CD4-positive, alpha-beta memory T cell (primary cell): ENCODE measurements at regions of chr16 and their contacts with region 1.

Region 1: GRCh38 chr16:23858542-23858941 is 22.8 kb downstream of the PRKCB start:
- DNase-seq: no peak
- H3K4me3 ChIP-seq: no peak overlapping the region
- H3K4me3 Mint-ChIP-seq: peak overlapping the region in 2 of 8 donors; percentile 44 to 45
- H3K27ac ChIP-seq: no peak overlapping the region
- H3K27ac Mint-ChIP-seq: peak overlapping the region in 4 of 7 donors; percentile 32 to 74 (median 52)
- H3K4me1 ChIP-seq: peaks cover 83% of the 10 kb centered on the region
- H3K4me1 Mint-ChIP-seq: peaks cover 64 to 90% (median 79%) of the 10 kb centered on the region in 4 donors
- H3K27me3 ChIP-seq: no peaks in the 10 kb centered on the region
- H3K27me3 Mint-ChIP-seq: no peaks in the 10 kb centered on the region

Region 2: GRCh38 chr16:23670137-23670776 is 188.3 kb before region 1 on chr16:
- CTCF ChIA-PET with region 1: no interaction called
- POLR2A ChIA-PET with region 1: no interaction called
- intact Hi-C with region 1: no loop called
- DNase-seq: no peak
- H3K4me3 ChIP-seq: no peak overlapping the region
- H3K4me3 Mint-ChIP-seq: no peak overlapping the region
- H3K27ac ChIP-seq: no peak overlapping the region
- H3K27ac Mint-ChIP-seq: peak overlapping the region in 3 of 7 donors; percentile 1 to 58 (median 36)
- H3K4me1 ChIP-seq: no peaks in the 10 kb centered on the region
- H3K4me1 Mint-ChIP-seq: peaks cover 0 to 10% (median 0%) of the 10 kb centered on the region in 4 donors
- H3K27me3 ChIP-seq: no peaks in the 10 kb centered on the region
- H3K27me3 Mint-ChIP-seq: no peaks in the 10 kb centered on the region

Region 3: DNA sequence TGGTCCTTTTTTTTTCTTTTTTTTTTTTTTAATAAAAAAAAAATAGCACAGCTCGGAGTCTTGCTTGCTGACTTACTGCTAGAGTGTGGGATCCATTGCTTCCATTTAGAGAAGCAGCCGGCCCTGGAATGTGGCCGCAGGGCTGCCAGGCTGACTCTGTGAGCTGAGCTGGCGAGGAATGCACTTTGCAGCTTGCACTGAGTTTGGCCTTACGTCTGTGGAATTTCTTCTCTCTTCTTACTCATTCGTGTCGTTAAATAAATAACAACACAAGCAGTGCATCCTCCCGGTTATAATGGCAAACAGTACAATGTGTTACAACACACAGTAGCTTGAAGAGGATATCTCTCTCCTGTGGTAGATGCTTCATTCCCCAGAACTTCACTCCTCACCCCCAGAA is 46.5 kb after region 1 on chr16:
- CTCF ChIA-PET with region 1: no interaction called
- POLR2A ChIA-PET with region 1: no interaction called
- intact Hi-C with region 1: loop called (anchors 10 kb)
- DNase-seq: no peak
- H3K4me3 ChIP-seq: no peak overlapping the region
- H3K4me3 Mint-ChIP-seq: no peak overlapping the region
- H3K27ac ChIP-seq: no peak overlapping the region
- H3K27ac Mint-ChIP-seq: peak overlapping the region in 2 of 7 donors; percentile 51 to 60
- H3K4me1 ChIP-seq: peaks cover 50% of the 10 kb centered on the region
- H3K4me1 Mint-ChIP-seq: peaks cover 56 to 94% (median 75%) of the 10 kb centered on the region in 4 donors
- H3K27me3 ChIP-seq: no peaks in the 10 kb centered on the region
- H3K27me3 Mint-ChIP-seq: no peaks in the 10 kb centered on the region

Region 4: DNA sequence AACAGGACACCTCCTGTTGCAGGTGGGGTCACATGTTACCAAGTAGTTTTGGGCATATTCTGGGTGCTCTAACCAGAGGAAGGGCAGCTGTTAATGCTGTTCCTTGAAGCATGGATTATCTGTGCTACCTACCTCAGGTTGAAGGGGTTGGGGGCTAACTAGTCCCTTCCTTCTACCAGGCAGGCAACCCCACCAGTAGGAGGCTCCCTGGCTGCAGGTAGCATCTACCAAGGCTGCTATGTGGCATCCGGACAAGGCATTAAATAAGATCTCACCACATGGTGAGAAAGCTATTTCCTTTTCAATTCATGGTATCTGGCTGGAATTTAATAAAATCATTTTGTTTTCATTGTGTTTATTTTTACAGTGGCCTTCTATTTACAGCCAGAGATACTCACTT is 460.1 kb after region 1 on chr16:
- CTCF ChIA-PET with region 1: no interaction called
- POLR2A ChIA-PET with region 1: no interaction called
- intact Hi-C with region 1: no loop called
- DNase-seq: no peak
- H3K4me3 ChIP-seq: no peak overlapping the region
- H3K4me3 Mint-ChIP-seq: no peak overlapping the region
- H3K27ac ChIP-seq: no peak overlapping the region
- H3K27ac Mint-ChIP-seq: no peak overlapping the region
- H3K4me1 ChIP-seq: no peaks in the 10 kb centered on the region
- H3K4me1 Mint-ChIP-seq: no peaks in the 10 kb centered on the region
- H3K27me3 ChIP-seq: no peaks in the 10 kb centered on the region
- H3K27me3 Mint-ChIP-seq: peaks cover 21% of the 10 kb centered on the region in 2 donors